Left lung (tissue), 14 donors: ENCODE measurements at regions of chr7 and their contacts with region 1.

Region 1: GRCh38 chr7:135281363-135281949 is 47.8 kb downstream of the STRA8 start:
- DNase-seq: peak in 3 of 4 donors; percentile 72 to 92 (median 85)
- ATAC-seq: peak; percentile 100
- H3K4me3 ChIP-seq: no peak overlapping the region
- H3K27ac ChIP-seq: no peak overlapping the region
- H3K4me1 ChIP-seq: no peaks in the 10 kb centered on the region
- H3K27me3 ChIP-seq: no peaks in the 10 kb centered on the region
- CTCF ChIP-seq: peak; percentile 74 to 89

Region 2: DNA sequence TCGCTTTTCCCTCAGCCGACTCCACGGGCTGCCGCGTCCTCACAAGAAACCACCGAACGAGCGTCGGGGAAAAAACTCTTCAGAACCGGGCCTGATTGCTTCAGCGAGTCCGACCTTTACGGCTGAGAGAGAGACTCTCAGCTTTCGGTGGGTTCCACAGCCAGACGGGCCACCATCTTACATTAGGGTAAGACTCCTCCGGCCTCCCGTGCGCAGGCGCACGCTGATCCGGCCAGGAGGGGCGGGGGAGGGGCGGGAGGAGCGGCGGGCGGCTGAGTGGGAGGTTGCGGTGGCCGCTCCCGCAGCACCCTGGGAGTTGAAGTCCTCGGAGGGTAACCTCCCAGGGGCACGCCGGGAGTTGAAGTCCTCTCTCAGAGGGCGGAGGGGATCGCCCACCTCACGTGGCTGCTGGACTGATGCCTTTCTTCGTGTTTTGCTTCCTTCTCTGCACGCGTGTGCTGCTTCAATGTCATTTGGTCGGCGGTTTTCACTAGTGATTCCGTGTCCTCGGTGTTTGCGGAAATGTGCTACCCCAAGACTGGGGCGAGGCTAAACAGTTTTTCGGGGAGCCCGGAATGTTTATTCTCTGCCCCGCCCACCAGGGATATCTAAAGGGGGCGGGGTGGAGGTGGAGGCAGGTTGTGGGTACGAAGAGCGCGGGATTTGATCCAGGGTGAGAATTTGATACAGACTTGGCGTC is 228.6 kb after region 1 on chr7 and contains the start of gene CNOT4:
- intact Hi-C with region 1: loop called in 1 of 2 experiments (anchors 10 kb)
- DNase-seq: peak; percentile 93 to 99 (median 98)
- ATAC-seq: peak; percentile 98
- H3K4me3 ChIP-seq: peak within 1 kb of the TSS; percentile 66 to 77
- H3K27ac ChIP-seq: peak within 1 kb of the TSS; percentile 91 to 92
- H3K4me1 ChIP-seq: peaks cover 4 to 37% of the 10 kb centered on the region in 2 donors
- H3K27me3 ChIP-seq: no peaks in the 10 kb centered on the region
- CTCF ChIP-seq: no peak
- polyA plus RNA-seq, gene CNOT4: 32.5 to 35.4 (median 34.0) TPM

Region 3: DNA sequence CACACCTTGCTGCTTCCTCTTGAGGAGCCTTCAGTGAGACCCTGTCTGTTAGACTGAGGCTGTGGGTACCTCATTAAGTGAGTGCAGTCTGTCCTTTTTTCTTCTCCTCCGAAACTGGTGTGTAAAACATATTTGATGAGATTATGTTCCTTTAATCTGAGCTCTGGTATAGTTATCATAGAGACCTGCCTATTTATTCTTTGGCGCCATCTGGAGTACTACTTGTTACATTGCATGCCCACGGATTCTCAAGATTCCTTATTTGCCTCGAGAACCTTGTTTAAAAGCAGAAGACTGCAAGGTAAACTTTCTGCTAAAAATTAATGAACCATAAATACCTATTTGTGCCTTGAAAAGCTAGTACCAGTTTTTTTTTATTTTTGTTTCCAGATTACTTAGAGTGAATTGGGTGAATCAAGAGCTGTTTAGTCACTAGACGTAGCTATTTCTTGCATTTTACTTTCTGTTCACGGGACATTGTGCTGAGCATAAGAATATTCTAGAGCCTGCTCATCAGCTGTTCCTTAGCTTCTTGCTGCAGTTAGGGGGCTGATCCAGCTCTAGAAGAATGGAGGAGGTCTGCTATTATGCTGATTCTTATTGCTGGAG is 363.9 kb after region 1 on chr7:
- intact Hi-C with region 1: loop called in 1 of 2 experiments (anchors 10 kb)
- DNase-seq: peak in 1 of 4 donors; percentile 36
- ATAC-seq: peak; percentile 92
- H3K4me3 ChIP-seq: no peak overlapping the region
- H3K27ac ChIP-seq: peak overlapping the region in 1 of 2 donors; percentile 18
- H3K4me1 ChIP-seq: no peaks in the 10 kb centered on the region
- H3K27me3 ChIP-seq: no peaks in the 10 kb centered on the region
- CTCF ChIP-seq: peak; percentile 65 to 77